ENCODE measurements at regions of chr22 and their contacts with region 1.

Region 1: GRCh38 chr22:48632646-48633246 is 1194.9 kb downstream of the BRD1 start:
- DNase-seq: no peak
- ATAC-seq: no peak
- H3K4me3 ChIP-seq: no peak overlapping the region
- H3K27ac ChIP-seq: no peak overlapping the region
- H3K4me1 ChIP-seq: no peaks in the 10 kb centered on the region
- H3K27me3 ChIP-seq: no peaks in the 10 kb centered on the region
- CTCF ChIP-seq: no peak

Region 2: DNA sequence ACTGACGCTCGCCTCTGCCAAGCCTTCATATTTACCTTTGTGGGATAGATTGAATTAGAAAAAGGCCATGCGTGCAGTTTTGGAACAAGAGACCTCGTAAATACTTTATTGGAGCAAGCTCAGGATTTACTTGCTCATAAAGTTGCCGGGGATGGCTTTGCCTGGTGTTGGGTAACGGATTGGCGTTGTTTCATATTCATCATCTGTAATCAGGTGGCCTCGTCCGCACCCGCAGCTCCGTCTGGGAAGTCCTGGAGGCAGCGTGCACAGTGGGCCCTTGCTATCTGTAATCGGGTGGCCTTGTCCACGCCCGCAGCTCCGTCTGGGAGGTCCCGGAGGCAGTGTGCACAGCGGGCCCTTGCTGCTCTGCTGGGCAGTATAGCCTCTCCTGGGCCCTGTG is 14.4 kb before region 1 on chr22:
- CTCF ChIA-PET with region 1: no interaction called
- POLR2A ChIA-PET with region 1: interaction called, 14 read pairs
- intact Hi-C with region 1: no loop called
- DNase-seq: no peak
- ATAC-seq: peak; percentile 49
- H3K4me3 ChIP-seq: no peak overlapping the region
- H3K27ac ChIP-seq: no peak overlapping the region
- H3K4me1 ChIP-seq: no peaks in the 10 kb centered on the region
- H3K27me3 ChIP-seq: no peaks in the 10 kb centered on the region
- CTCF ChIP-seq: no peak

Measured in PC-3 (cell line).